ENCODE measurements at regions of chr5 and their contacts with region 1.

Region 1: DNA sequence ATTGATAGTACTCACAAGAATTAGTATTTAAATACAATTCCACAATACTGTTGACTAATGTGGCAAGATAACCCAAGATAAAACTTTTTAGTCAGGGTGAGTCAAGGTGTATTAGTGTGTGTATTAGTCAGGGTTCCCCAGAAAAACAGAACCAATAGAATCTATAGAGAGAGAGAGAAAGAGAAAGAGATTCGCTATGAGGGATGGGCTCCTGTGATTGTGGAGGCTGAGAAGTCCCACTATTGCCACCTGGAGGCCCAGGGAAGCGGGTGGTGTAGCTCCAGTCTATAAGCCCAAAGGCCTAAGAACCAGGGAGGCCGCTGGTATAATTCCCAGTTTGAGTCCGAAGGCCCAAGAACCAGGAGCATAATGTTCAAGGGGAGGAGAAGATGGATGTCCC is 10.0 kb upstream of the SHISAL2B start:
- DNase-seq: no peak
- ATAC-seq: no peak
- H3K4me3 ChIP-seq: no peak overlapping the region
- H3K4me3 Mint-ChIP-seq: no peak overlapping the region
- H3K27ac ChIP-seq: no peak overlapping the region
- H3K27ac Mint-ChIP-seq: no peak overlapping the region
- H3K4me1 ChIP-seq: no peaks in the 10 kb centered on the region
- H3K4me1 Mint-ChIP-seq: no peaks in the 10 kb centered on the region
- H3K27me3 ChIP-seq: no peaks in the 10 kb centered on the region
- H3K27me3 Mint-ChIP-seq: peaks cover 9 to 36% (median 31%) of the 10 kb centered on the region in 5 donors

Region 2: DNA sequence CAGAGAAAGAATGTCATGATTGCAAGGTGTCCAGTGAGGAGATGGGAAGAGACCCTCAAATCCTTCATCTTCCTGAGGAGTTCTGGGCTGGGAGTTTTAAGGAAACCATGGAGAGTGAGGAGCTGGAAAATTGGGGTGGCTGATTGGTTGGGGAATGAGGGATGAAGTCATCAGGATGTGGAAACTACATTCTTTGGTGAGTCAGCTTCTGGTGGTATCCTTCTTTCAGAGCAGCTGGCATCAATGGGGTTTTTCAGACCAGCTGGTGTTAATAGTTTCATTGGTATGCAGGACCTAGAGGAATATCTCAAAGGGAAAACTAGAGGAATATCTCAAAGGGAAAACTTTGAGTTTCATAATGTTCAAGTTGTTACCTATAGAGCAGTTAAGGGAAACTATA is 469.4 kb before region 1 on chr5:
- CTCF ChIA-PET with region 1: no interaction called
- POLR2A ChIA-PET with region 1: no interaction called
- intact Hi-C with region 1: no loop called
- DNase-seq: no peak
- ATAC-seq: no peak
- H3K4me3 ChIP-seq: no peak overlapping the region
- H3K4me3 Mint-ChIP-seq: no peak overlapping the region
- H3K27ac ChIP-seq: no peak overlapping the region
- H3K27ac Mint-ChIP-seq: no peak overlapping the region
- H3K4me1 ChIP-seq: no peaks in the 10 kb centered on the region
- H3K4me1 Mint-ChIP-seq: no peaks in the 10 kb centered on the region
- H3K27me3 ChIP-seq: no peaks in the 10 kb centered on the region
- H3K27me3 Mint-ChIP-seq: no peaks in the 10 kb centered on the region

Region 3: GRCh38 chr5:64895748-64896147 is 215.5 kb after region 1 on chr5:
- CTCF ChIA-PET with region 1: no interaction called
- POLR2A ChIA-PET with region 1: no interaction called
- intact Hi-C with region 1: loop called in 1 of 2 experiments (anchors 5 kb)
- DNase-seq: no peak
- ATAC-seq: no peak
- H3K4me3 ChIP-seq: no peak overlapping the region
- H3K4me3 Mint-ChIP-seq: no peak overlapping the region
- H3K27ac ChIP-seq: no peak overlapping the region
- H3K27ac Mint-ChIP-seq: no peak overlapping the region
- H3K4me1 ChIP-seq: no peaks in the 10 kb centered on the region
- H3K4me1 Mint-ChIP-seq: no peaks in the 10 kb centered on the region
- H3K27me3 ChIP-seq: no peaks in the 10 kb centered on the region
- H3K27me3 Mint-ChIP-seq: no peaks in the 10 kb centered on the region

Region 4: DNA sequence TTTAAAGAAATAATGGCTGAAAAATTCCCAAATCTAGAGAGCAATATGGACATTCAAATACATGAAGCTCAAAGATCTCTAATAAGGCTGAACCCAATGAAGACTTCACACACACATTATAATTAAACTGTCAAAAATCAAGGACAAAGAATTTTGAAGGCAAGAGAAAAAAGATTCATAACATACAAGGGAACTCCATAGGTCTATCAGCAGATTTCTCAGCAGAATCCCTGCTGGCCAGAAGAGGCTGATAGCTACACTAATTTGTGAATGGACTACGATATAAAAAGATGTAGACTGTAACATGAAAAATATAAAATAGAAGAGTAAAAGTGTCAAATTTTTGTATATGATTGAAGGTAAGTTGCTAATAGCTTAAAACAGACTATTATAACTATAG is 549.6 kb after region 1 on chr5:
- CTCF ChIA-PET with region 1: no interaction called
- POLR2A ChIA-PET with region 1: no interaction called
- intact Hi-C with region 1: no loop called
- DNase-seq: no peak
- ATAC-seq: no peak
- H3K4me3 ChIP-seq: no peak overlapping the region
- H3K4me3 Mint-ChIP-seq: no peak overlapping the region
- H3K27ac ChIP-seq: no peak overlapping the region
- H3K27ac Mint-ChIP-seq: no peak overlapping the region
- H3K4me1 ChIP-seq: no peaks in the 10 kb centered on the region
- H3K4me1 Mint-ChIP-seq: no peaks in the 10 kb centered on the region
- H3K27me3 ChIP-seq: no peaks in the 10 kb centered on the region
- H3K27me3 Mint-ChIP-seq: no peaks in the 10 kb centered on the region